ENCODE measurements at regions of chr1 and their contacts with region 1.

Region 1: DNA sequence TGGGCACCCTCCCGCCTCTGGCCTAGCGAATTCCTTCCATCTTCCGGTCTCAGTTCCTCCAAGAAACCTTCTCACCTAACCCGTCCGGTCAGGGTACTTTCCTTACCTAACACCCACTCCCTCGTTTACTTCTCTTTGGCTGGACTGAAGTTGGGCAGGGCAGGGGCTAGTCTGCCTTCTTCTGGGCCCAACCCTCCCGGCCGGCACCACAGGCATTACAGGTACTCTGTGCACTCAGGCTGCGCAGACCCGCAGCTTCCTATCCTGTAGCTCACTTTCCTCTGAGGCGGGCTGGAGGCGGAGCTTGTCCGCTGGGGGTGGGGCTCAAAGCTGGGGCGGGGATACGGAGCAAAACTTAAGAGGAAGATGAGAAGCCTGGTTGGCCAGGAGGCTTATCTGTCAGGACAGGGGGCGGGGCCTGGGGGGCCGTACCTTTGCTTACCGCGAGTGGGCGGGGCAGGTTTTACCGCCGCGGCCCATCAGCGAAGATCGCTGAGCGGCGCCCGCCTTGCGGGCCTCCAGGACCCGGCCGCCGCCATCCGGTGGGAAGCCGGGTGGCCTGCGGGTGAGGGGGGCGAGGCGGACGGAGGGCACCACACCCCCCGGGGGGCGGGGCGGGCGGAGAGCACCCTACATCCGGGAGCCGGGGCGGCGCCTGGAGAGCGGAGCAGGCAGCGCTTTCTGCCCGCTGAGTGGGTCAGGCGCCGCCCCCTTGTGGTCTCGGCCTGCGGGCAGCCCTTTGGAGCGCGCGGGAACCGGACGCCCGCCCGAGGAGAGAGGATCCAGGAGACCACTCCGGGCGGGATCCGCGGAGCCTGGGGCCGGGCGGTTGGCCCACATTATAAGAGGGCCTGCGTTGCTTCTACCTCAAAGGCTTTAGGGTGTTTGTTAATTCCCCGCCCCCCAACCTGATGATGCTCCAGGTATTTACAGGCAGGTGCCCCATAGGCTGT is 31.9 kb downstream of the ZNF648 start:
- DNase-seq: peak; percentile 85
- H3K4me3 ChIP-seq: peak overlapping the region; percentile 21 to 53 (median 41)
- H3K27ac ChIP-seq: no peak overlapping the region
- H3K4me1 ChIP-seq: no peaks in the 10 kb centered on the region
- H3K27me3 ChIP-seq: no peaks in the 10 kb centered on the region
- CTCF ChIP-seq: peak; percentile 14 to 53
- POLR2A ChIP-seq: no peak

Region 2: GRCh38 chr1:182015360-182015759 is 14.3 kb before region 1 on chr1:
- CTCF ChIA-PET with region 1: no interaction called
- POLR2A ChIA-PET with region 1: no interaction called
- dilution Hi-C with region 1: no loop called
- intact Hi-C with region 1: no loop called
- DNase-seq: no peak
- H3K4me3 ChIP-seq: no peak overlapping the region
- H3K27ac ChIP-seq: no peak overlapping the region
- H3K4me1 ChIP-seq: no peaks in the 10 kb centered on the region
- H3K27me3 ChIP-seq: no peaks in the 10 kb centered on the region
- CTCF ChIP-seq: no peak
- POLR2A ChIP-seq: no peak

Region 3: DNA sequence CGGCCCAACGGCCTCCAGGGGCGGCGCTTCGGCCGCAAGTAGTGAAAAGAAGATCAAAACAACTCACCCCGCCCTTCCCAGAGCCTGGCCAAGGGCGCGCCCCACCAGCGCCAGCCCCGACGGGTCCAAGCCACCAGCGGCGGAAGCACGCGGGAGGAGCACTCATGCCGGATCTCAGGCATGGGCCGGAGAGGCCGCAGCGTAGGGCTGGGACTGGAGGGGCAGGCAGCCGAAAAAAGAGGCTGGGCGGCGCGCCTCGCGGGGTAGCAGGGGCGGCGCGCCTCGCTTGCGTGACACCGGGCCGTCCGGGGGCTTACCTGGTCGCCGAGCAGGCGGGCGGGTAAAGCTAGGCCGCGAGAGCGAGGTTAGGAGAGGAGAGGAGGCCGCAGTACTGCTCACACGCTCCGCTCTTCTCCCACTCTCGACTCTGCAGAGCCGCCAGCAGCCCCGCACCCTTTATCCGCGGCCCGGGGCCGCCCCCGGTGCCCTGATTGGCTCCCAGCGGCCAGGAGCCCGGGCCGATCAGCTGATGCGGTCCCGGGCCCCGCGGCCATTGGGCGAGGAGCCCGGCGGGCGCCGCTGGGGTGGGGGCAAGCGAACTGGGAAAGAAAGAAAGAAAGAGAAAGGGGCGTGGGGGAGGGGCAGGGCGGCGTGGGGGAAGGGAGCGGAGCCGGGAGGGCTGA is 361.8 kb after region 1 on chr1 and contains the start of gene GLUL:
- CTCF ChIA-PET with region 1: no interaction called
- POLR2A ChIA-PET with region 1: no interaction called
- dilution Hi-C with region 1: no loop called
- intact Hi-C with region 1: loop called (anchors 2 kb)
- DNase-seq: peak; percentile 94
- H3K4me3 ChIP-seq: peak within 1 kb of the TSS; percentile 70 to 90 (median 76)
- H3K27ac ChIP-seq: peak within 1 kb of the TSS; percentile 81
- H3K4me1 ChIP-seq: peaks cover 4% of the 10 kb centered on the region
- H3K27me3 ChIP-seq: no peaks in the 10 kb centered on the region
- CTCF ChIP-seq: peak in 1 of 2 donors; percentile 33
- POLR2A ChIP-seq: peak; percentile 99
- total RNA-seq, gene GLUL: 181 and 187 TPM in 2 replicates

Measured in endothelial cell of umbilical vein (primary cell).